ENCODE measurements at regions of chr18 and their contacts with region 1.

Region 1: GRCh38 chr18:48928787-48929186 is 22.0 kb downstream of the SMAD7 start:
- DNase-seq: peak; percentile 65
- ATAC-seq: peak; percentile 5; the same call in 1 of the 3 replicates
- H3K4me3 ChIP-seq: peak overlapping the region in 2 of 3 experiments; percentile 10 to 50; a peak in 2 of 6 replicates
- H3K27ac ChIP-seq: peak overlapping the region; percentile 89
- H3K4me1 ChIP-seq: peaks cover 97% of the 10 kb centered on the region
- H3K27me3 ChIP-seq: no peaks in the 10 kb centered on the region
- CTCF ChIP-seq: no peak
- EP300 ChIP-seq: peak in 1 of 2 experiments; percentile 40; a peak in 1 of 4 replicates
- POLR2A ChIP-seq: no peak
- RAD21 ChIP-seq: no peak

Region 2: DNA sequence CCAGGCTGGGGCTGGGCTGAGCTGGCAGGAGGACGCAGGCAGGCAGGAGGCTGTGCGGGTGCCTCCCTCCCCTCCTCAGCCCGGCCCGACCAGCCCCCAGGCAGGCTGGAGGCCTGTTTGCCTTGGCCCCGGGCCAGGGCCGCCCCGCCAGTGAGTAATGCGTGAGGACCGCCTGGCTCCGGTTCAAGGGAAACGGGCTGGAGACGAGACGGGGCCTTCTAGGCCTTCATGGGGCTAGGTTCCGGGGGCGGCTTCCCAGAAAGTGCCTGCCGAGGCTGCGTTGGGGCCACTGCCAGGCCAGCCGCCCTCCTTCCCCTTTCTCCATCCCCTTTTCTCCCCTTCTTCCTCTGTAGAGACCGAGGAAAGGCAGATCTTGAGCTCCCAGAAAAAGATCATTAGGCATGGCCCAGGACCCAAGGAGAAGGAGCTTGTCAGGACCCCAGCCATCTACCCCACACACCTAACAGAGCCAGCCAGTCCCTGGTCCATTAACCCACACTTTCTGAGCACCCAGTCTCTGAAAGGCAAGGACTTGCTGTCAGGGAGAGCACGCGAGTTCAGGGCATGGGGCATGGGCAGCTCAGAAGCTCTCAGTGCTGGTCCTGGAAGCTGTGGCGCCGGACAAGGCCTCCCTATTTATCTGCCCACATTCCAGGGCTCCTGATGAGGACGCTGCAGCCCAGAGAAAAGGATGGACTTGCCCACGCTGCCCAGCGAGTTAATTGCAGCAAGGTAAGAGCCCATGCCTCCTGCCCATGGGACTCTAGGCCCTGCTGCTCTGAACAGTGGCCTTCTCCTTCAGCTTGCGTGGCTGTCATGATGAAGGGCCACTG is 26.5 kb before region 1 on chr18:
- CTCF ChIA-PET with region 1: no interaction called
- POLR2A ChIA-PET with region 1: interaction called, 17 read pairs
- in situ Hi-C with region 1: no loop called
- intact Hi-C with region 1: loop called (anchors 1 kb)
- DNase-seq: peak; percentile 86
- ATAC-seq: peak; percentile 89
- H3K4me3 ChIP-seq: peak overlapping the region; percentile 51 to 73 (median 57); a peak in 5 of 6 replicates
- H3K27ac ChIP-seq: peak overlapping the region; percentile 78
- H3K4me1 ChIP-seq: peaks cover 48% of the 10 kb centered on the region
- H3K27me3 ChIP-seq: no peaks in the 10 kb centered on the region
- CTCF ChIP-seq: peak; percentile 65
- EP300 ChIP-seq: peak in 1 of 2 experiments; percentile 85; a peak in 2 of 4 replicates
- POLR2A ChIP-seq: peak in 1 of 2 experiments; percentile 52; a peak in 2 of 4 replicates
- RAD21 ChIP-seq: no peak

Region 3: DNA sequence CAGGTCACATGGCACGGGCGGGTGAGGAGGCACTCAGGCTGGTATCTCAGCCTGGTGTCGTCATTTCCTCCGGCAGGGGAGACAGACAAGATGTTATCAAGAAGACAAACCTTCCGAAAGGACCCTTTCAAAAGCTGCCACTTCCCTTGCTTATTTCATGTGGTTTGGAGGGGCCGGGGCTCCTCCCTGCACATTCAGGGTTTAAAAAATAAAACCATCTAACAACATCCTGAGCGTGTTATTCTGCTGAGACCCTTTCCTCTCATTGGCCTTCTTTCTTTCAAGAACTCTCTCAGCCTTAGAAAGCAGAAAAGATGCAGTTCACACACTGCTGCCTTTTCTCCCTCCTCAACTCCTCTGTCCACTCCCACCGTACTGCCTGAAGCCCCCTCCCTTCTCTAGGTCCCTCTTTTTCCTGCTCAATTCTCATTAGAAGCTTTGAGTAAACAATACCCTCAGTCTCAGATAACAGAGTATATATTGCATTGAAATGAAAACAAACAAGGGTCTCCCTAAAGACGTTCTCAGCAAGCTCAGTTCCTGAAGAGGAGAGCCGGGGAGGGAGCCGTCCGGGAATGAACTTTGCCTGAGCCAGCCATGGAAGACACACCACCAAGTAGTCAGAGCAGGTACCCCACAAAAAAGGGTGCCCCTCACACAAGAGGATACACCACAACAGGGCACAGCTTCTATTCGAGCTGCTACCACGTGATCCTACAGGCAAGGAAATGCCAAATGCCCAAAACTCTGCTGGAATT is 12.2 kb after region 1 on chr18:
- CTCF ChIA-PET with region 1: no interaction called
- POLR2A ChIA-PET with region 1: interaction called, 79 read pairs
- in situ Hi-C with region 1: no loop called
- intact Hi-C with region 1: loop called (anchors 1 kb)
- DNase-seq: no peak
- ATAC-seq: no peak
- H3K4me3 ChIP-seq: peak overlapping the region in 1 of 3 experiments; percentile 53; a peak in 1 of 6 replicates
- H3K27ac ChIP-seq: peak overlapping the region; percentile 12
- H3K4me1 ChIP-seq: peaks cover 99% of the 10 kb centered on the region
- H3K27me3 ChIP-seq: no peaks in the 10 kb centered on the region
- CTCF ChIP-seq: no peak
- EP300 ChIP-seq: no peak
- POLR2A ChIP-seq: no peak
- RAD21 ChIP-seq: no peak

Measured in HepG2 (cell line).